ENCODE measurements at regions of chr11 and their contacts with region 1.

Region 1: GRCh38 chr11:62787005-62787759 is at the start of gene TMEM179B:
- DNase-seq: peak; percentile 100
- ATAC-seq: peak; percentile 63
- H3K4me3 ChIP-seq: peak within 1 kb of the TSS; percentile 86
- H3K27ac ChIP-seq: peak within 1 kb of the TSS; percentile 90
- H3K4me1 ChIP-seq: peaks cover 28% of the 10 kb centered on the region
- H3K27me3 ChIP-seq: no peaks in the 10 kb centered on the region
- CTCF ChIP-seq: peak; percentile 39; the same call in 1 of the 2 replicates
- total RNA-seq, gene TMEM179B: 80.2 and 86.7 TPM in 2 replicates

Region 2: DNA sequence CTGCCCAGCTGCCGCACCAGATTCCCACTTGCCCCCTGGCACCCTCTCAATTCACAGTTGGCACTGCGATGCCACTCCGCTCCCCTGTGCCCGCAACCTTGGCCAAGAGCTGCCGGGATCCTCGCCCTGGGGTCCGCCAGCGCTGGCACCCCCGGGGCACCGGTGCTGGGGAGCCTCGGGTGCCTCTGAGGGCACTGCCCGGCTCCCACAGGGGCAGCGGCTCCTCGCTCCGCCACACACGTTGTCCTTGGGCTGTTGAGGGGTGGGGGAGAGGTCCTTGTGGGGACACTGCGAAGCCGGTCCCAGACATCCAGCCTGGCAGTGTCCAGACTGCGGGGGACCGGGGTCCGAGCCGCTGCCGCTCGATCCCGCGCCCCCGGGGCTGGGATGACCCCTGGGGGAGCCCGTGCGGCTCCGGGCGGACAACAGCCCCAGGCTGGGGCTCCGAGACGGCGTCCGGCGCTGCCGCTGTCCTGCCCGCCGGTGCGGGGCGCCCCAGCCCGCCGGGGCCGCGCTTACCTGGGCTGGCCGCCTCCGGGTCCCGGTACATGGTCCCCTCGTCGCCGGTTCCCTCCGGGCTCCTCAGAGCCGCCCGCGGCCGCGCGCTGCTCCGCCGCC is 1206.8 kb before region 1 on chr11:
- CTCF ChIA-PET with region 1: no interaction called
- POLR2A ChIA-PET with region 1: no interaction called
- intact Hi-C with region 1: no loop called
- DNase-seq: peak; percentile 32
- ATAC-seq: peak; percentile 32
- H3K4me3 ChIP-seq: peak overlapping the region; percentile 84
- H3K27ac ChIP-seq: no peak overlapping the region
- H3K4me1 ChIP-seq: peaks cover 16% of the 10 kb centered on the region
- H3K27me3 ChIP-seq: peaks cover 9% of the 10 kb centered on the region
- CTCF ChIP-seq: no peak; the same call in 1 of the 2 replicates

Region 3: GRCh38 chr11:62652161-62653006 is 134.8 kb before region 1 on chr11:
- CTCF ChIA-PET with region 1: no interaction called
- POLR2A ChIA-PET with region 1: no interaction called
- intact Hi-C with region 1: no loop called
- DNase-seq: no peak
- ATAC-seq: no peak
- H3K4me3 ChIP-seq: peak overlapping the region; percentile 76
- H3K27ac ChIP-seq: peak overlapping the region; percentile 33
- H3K4me1 ChIP-seq: peaks cover 11% of the 10 kb centered on the region
- H3K27me3 ChIP-seq: no peaks in the 10 kb centered on the region
- CTCF ChIP-seq: no peak

Region 4: GRCh38 chr11:62753736-62754603 is 33.2 kb before region 1 on chr11 and contains the start of gene ZBTB3:
- CTCF ChIA-PET with region 1: interaction called, 13 read pairs
- POLR2A ChIA-PET with region 1: no interaction called
- intact Hi-C with region 1: no loop called
- DNase-seq: peak; percentile 99
- ATAC-seq: peak; percentile 98
- H3K4me3 ChIP-seq: peak within 1 kb of the TSS; percentile 87
- H3K27ac ChIP-seq: peak within 1 kb of the TSS; percentile 73
- H3K4me1 ChIP-seq: peaks cover 16% of the 10 kb centered on the region
- H3K27me3 ChIP-seq: no peaks in the 10 kb centered on the region
- CTCF ChIP-seq: no peak
- total RNA-seq, gene ZBTB3: 2.2 and 3.3 TPM in 2 replicates

Region 5: GRCh38 chr11:62771144-62772021 is 15.8 kb before region 1 on chr11 and contains the start of gene TAF6L:
- CTCF ChIA-PET with region 1: interaction called, 12 read pairs
- POLR2A ChIA-PET with region 1: interaction called, 4 read pairs
- intact Hi-C with region 1: no loop called
- DNase-seq: peak; percentile 99
- ATAC-seq: peak; percentile 92
- H3K4me3 ChIP-seq: peak within 1 kb of the TSS; percentile 74
- H3K27ac ChIP-seq: peak within 1 kb of the TSS; percentile 76
- H3K4me1 ChIP-seq: peaks cover 13% of the 10 kb centered on the region
- H3K27me3 ChIP-seq: no peaks in the 10 kb centered on the region
- CTCF ChIP-seq: no peak
- total RNA-seq, gene TAF6L: 40.2 and 43.9 TPM in 2 replicates

Region 6: DNA sequence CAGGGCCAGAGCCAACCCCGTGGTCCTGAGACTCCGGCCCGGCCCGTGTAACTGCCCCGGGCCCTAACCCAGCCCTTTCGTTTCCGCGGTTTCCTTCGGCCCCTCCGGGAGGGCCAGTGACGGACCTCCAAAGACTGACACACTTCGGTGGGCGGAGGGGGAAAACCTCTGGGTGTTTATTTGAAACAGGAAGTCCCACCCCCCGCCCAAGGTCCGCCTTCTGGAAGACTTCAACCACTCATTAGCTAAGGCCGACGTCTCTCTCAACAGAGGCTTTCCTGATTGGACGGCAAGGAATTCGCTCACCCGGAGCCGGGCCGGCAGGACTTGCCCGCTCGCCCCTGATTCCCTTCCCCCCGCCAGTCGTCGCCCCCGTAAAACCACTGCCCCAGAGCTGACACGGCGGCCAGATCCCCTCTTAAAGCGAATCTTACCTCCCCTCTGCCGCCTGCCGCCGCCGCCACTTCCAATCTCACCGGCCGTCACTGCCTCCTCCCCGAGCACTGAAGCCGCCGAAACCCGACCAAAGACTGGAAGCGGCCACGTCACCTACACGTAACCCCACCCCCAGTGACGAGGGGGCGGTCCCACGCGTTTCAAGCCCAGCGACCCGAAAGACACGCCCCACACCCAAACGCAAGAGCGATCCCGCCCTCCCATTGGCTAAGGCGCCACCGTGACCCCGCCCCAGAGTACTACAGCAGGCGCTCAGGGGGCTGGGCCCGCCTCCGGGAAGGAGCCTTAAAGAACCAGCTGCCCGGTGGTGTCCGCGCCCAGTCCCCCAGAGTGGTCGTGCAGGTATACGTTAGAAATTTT is 44.5 kb after region 1 on chr11 and contains the start of gene STX5:
- CTCF ChIA-PET with region 1: interaction called, 4 read pairs
- POLR2A ChIA-PET with region 1: interaction called, 3 read pairs
- intact Hi-C with region 1: loop called (anchors 2 kb)
- DNase-seq: peak; percentile 99
- ATAC-seq: peak; percentile 89
- H3K4me3 ChIP-seq: peak within 1 kb of the TSS; percentile 91
- H3K27ac ChIP-seq: peak within 1 kb of the TSS; percentile 75
- H3K4me1 ChIP-seq: peaks cover 22% of the 10 kb centered on the region
- H3K27me3 ChIP-seq: no peaks in the 10 kb centered on the region
- CTCF ChIP-seq: no peak
- total RNA-seq, gene STX5: 41.4 and 48.2 TPM in 2 replicates

Region 7: DNA sequence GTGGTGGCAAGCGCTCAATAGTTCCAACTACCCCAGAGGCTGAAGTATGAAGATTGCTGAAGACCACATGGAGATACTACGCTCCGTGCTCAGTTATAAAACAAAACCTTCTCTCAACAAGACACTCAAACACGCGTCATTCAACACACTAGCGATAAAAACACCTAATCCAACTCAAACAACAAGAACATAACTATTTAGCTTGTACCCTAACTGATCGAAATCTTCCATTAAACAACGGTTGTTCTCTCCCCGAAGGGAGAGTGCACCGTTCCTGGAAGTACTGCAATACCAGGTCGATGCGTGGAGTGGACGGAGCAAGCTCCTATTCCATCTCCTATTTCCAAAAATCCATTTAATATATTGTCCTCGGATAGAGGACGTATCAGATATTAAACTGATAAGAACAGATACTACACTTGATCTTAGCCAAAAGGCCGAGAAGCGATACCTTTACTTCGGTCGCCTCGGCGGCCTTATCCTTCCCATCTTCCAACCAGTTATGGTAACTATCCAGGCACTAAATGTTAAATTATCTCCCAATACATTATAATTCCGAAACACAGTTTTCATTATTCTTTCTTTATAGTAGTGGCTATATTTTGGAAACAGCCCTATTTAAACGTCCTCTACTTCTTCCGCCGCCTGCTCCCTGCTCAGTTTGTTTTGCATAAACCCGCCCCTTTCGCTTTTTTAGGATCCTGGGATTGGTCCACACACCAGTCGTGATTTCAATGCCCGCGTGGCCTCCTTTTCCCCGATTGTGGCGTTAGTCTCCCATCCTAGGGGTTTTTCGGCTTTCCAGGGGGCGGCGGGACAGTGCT is 54.4 kb after region 1 on chr11:
- CTCF ChIA-PET with region 1: interaction called, 7 read pairs
- POLR2A ChIA-PET with region 1: interaction called, 16 read pairs
- intact Hi-C with region 1: loop called (anchors 2 kb)
- DNase-seq: peak; percentile 100
- ATAC-seq: peak; percentile 75
- H3K4me3 ChIP-seq: peak overlapping the region; percentile 64
- H3K27ac ChIP-seq: peak overlapping the region; percentile 90
- H3K4me1 ChIP-seq: peaks cover 6% of the 10 kb centered on the region
- H3K27me3 ChIP-seq: no peaks in the 10 kb centered on the region
- CTCF ChIP-seq: no peak

Region 8: DNA sequence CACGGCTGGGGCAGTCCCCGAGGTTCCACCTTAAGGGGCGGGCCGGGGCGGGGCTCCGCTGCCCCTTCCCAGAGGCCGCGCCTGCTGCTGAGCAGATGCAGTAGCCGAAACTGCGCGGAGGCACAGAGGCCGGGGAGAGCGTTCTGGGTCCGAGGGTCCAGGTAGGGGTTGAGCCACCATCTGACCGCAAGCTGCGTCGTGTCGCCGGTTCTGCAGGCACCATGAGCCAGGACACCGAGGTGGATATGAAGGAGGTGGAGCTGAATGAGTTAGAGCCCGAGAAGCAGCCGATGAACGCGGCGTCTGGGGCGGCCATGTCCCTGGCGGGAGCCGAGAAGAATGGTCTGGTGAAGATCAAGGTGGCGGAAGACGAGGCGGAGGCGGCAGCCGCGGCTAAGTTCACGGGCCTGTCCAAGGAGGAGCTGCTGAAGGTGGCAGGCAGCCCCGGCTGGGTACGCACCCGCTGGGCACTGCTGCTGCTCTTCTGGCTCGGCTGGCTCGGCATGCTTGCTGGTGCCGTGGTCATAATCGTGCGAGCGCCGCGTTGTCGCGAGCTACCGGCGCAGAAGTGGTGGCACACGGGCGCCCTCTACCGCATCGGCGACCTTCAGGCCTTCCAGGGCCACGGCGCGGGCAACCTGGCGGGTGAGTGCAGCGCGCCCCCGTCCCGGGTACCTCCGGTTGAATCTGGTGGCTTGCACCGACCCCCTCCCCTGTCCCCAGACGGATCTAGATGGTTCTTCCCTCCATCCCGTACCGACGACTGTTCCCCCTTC is 93.8 kb after region 1 on chr11 and contains the start of gene SLC3A2:
- CTCF ChIA-PET with region 1: interaction called, 6 read pairs
- POLR2A ChIA-PET with region 1: no interaction called
- intact Hi-C with region 1: loop called (anchors 1 kb)
- DNase-seq: peak; percentile 93
- ATAC-seq: peak; percentile 82
- H3K4me3 ChIP-seq: peak within 1 kb of the TSS; percentile 85
- H3K27ac ChIP-seq: peak within 1 kb of the TSS; percentile 93
- H3K4me1 ChIP-seq: peaks cover 38% of the 10 kb centered on the region
- H3K27me3 ChIP-seq: no peaks in the 10 kb centered on the region
- CTCF ChIP-seq: peak; percentile 81
- total RNA-seq, gene SLC3A2: 243 and 304 TPM in 2 replicates

Measured in PC-3 (cell line).